ENCODE measurements at regions of chr3 and their contacts with region 1.

Region 1: GRCh38 chr3:9932843-9933560 is 632 bp upstream of the CRELD1 start:
- DNase-seq: peak; percentile 48 to 70
- H3K4me3 ChIP-seq: peak overlapping the region; percentile 72
- H3K27ac ChIP-seq: peak overlapping the region; percentile 89
- H3K4me1 ChIP-seq: peaks cover 23% of the 10 kb centered on the region
- H3K27me3 ChIP-seq: no peaks in the 10 kb centered on the region
- CTCF ChIP-seq: peak; percentile 79

Region 2: DNA sequence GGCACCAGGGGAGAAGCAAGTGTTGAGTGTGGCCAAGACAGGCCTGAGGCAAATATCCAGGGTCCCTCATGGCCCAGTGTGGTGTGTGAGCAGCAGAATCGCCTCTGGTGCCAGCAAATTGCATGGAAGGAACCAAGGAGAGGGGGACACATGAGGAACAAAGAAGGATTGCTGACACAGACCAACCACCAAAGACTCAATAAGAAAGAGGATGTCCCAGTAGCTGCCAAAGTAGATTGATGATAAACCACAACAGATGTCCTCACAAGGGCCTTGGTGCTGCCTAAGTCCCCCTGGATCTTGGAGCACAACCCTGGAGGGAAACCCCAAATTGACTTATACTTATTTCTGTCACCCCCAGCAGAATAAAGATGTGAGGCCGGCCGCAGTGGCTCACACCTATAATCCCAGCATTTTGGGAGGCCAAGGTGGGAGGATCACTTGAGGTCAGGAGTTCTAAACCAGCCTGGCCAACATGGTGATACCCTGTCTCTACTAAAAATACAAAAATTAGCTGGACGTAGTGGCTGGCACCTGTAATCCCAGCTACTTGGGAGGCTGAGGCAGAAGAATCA is 694.2 kb before region 1 on chr3:
- CTCF ChIA-PET with region 1: no interaction called
- POLR2A ChIA-PET with region 1: no interaction called
- intact Hi-C with region 1: no loop called
- DNase-seq: no peak
- H3K4me3 ChIP-seq: no peak overlapping the region
- H3K27ac ChIP-seq: no peak overlapping the region
- H3K4me1 ChIP-seq: no peaks in the 10 kb centered on the region
- H3K27me3 ChIP-seq: no peaks in the 10 kb centered on the region
- CTCF ChIP-seq: no peak

Region 3: GRCh38 chr3:9820944-9821532 is 112.0 kb before region 1 on chr3:
- CTCF ChIA-PET with region 1: interaction called, 18 read pairs
- POLR2A ChIA-PET with region 1: no interaction called
- intact Hi-C with region 1: no loop called
- DNase-seq: peak in 1 of 2 experiments; percentile 36
- H3K4me3 ChIP-seq: no peak overlapping the region
- H3K27ac ChIP-seq: no peak overlapping the region
- H3K4me1 ChIP-seq: no peaks in the 10 kb centered on the region
- H3K27me3 ChIP-seq: no peaks in the 10 kb centered on the region
- CTCF ChIP-seq: peak; percentile 65

Region 4: GRCh38 chr3:9852549-9852948 is 80.5 kb before region 1 on chr3:
- CTCF ChIA-PET with region 1: no interaction called
- POLR2A ChIA-PET with region 1: interaction called, 26 read pairs
- intact Hi-C with region 1: loop called (anchors 2 kb)
- DNase-seq: no peak
- H3K4me3 ChIP-seq: no peak overlapping the region
- H3K27ac ChIP-seq: no peak overlapping the region
- H3K4me1 ChIP-seq: 0 out of 2 replicates have a peak, but pooled peaks cover 8% of the 10 kb centered on the region
- H3K27me3 ChIP-seq: no peaks in the 10 kb centered on the region
- CTCF ChIP-seq: 0 out of 2 replicates have a peak, but pooled peaks have one; percentile 17

Region 5: DNA sequence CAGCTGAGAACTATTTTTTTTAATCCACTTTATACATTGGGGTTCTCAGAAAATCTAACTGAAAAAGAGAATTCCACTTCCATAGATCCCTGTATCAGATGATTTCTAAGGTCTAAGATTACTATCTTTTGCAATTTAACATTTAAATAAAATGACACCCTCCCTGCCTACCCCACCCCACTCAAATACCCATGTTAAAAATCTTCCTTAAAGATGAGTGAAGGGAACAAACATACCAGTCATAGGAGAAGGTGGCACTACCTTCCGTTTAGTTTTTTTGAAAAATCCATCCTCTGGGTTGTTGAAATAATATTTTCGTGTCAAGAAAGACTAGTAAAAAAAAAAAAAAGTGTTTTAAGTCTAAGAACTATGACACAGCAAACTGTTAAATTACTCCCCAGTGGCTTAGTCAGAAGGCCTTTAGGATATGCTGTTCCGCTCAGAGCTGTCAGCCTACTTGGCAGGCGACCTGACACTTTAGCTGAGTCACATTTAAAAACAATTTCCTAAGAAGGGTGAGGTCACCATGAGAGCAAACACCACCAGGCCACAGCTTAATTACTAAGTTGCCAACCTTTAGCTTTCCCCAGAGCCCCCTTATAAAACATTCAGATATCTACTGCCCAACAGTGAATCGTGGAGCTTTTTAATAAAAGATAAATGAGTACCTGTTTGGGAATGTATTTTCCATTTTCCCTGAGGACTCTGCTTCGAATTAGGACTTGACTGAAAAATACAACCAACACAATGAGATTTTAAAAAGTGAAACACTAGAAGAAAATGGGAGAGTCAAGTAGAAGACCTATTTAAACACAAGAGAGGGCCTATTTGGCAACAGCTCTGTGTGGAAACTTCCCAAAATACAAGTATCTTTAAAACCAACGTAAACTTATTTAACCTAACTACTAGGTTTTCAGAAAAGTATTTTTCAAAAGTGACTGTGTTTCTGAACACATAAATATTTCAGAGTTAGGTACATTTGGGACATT is 44.0 kb after region 1 on chr3:
- CTCF ChIA-PET with region 1: interaction called, 16 read pairs
- POLR2A ChIA-PET with region 1: no interaction called
- intact Hi-C with region 1: no loop called
- DNase-seq: peak; percentile 69 to 93
- H3K4me3 ChIP-seq: no peak overlapping the region
- H3K27ac ChIP-seq: peak overlapping the region; percentile 90
- H3K4me1 ChIP-seq: peaks cover 26% of the 10 kb centered on the region
- H3K27me3 ChIP-seq: no peaks in the 10 kb centered on the region
- CTCF ChIP-seq: no peak

Region 6: DNA sequence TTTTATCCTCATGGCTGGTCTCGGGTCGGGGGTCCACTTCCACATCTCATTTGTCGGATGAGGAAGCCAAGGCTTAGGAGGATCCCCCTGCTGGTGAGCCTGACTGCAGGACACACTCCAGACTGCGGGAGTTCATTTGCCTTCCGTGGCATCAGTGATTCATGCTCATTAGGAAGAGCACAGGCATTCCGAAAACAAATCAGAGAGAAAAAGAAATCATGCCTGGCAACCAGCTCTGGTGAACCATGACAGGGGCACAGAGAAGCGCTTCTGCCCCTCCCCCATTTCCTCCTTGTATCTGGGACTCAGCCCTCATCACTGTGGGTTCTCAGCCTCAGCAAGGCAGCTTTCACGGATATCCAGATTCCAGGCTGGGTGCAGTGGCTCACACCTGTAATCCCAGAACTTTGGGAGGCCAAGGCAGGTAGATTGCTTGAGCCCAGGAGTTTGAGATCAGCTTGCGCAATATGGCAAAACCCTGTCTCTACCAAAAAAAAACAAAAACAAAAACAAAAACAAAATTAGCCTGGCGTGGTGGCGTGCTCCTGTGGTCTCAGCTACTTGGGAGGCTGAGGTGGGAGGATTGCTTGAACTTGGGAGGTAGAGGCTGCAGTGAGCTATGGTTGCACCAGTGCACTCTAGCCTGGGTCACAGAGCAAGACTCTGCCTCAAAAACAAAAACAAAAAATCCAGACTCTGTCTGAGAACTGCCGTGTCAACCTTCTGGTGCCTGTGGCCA is 260.1 kb after region 1 on chr3:
- CTCF ChIA-PET with region 1: interaction called, 14 read pairs
- POLR2A ChIA-PET with region 1: no interaction called
- intact Hi-C with region 1: no loop called
- DNase-seq: peak; percentile 30 to 56
- H3K4me3 ChIP-seq: no peak overlapping the region
- H3K27ac ChIP-seq: peak overlapping the region; percentile 97
- H3K4me1 ChIP-seq: peaks cover 84% of the 10 kb centered on the region
- H3K27me3 ChIP-seq: no peaks in the 10 kb centered on the region
- CTCF ChIP-seq: no peak

Measured in PC-9 (cell line).